ENCODE measurements at regions of chr15 and their contacts with region 1.

Region 1: GRCh38 chr15:90529371-90530249 is at the start of gene CRTC3:
- DNase-seq: peak; percentile 35 to 71 (median 60)
- ATAC-seq: peak; percentile 82 to 84
- H3K4me3 Mint-ChIP-seq: peak within 1 kb of the TSS; percentile 92 to 98 (median 94)
- H3K27ac Mint-ChIP-seq: peak within 1 kb of the TSS; percentile 89 to 97 (median 92)
- H3K4me1 Mint-ChIP-seq: peaks cover 23 to 52% (median 45%) of the 10 kb centered on the region in 4 donors
- H3K27me3 Mint-ChIP-seq: no peaks in the 10 kb centered on the region
- polyA plus RNA-seq, gene CRTC3: 21.9 to 51.1 (median 33.5) TPM

Region 2: GRCh38 chr15:90471769-90472168 is 57.8 kb before region 1 on chr15:
- POLR2A ChIA-PET with region 1: no interaction called
- DNase-seq: no peak
- ATAC-seq: no peak
- H3K4me3 Mint-ChIP-seq: no peak overlapping the region
- H3K27ac Mint-ChIP-seq: no peak overlapping the region
- H3K4me1 Mint-ChIP-seq: peaks cover 10 to 19% (median 13%) of the 10 kb centered on the region in 4 donors
- H3K27me3 Mint-ChIP-seq: no peaks in the 10 kb centered on the region

Region 3: GRCh38 chr15:90512981-90513380 is 16.6 kb before region 1 on chr15:
- POLR2A ChIA-PET with region 1: interaction called, 17 read pairs
- DNase-seq: no peak
- ATAC-seq: no peak
- H3K4me3 Mint-ChIP-seq: no peak overlapping the region
- H3K27ac Mint-ChIP-seq: no peak overlapping the region
- H3K4me1 Mint-ChIP-seq: peaks cover 15 to 26% (median 22%) of the 10 kb centered on the region in 4 donors
- H3K27me3 Mint-ChIP-seq: no peaks in the 10 kb centered on the region

Region 4: DNA sequence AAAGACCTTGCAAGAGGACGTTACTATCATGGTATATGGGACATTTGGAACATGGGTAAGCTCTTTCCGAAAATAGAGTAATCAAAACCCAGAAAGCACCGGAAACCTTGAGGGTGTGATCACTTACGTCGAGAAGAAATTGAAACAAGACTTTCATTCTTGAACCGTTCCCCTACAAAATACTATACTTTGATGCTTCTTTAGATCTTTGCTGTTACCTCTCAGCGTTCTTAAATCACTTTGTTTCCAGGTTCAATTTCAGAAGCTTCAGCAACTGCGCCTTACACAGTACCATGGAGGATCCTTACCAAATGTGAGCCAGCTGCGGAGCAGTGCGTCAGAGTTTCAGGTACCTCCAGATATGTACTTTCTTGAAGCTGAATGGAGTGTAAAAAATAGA is 10.2 kb after region 1 on chr15:
- POLR2A ChIA-PET with region 1: interaction called, 25 read pairs
- DNase-seq: peak in 8 of 10 donors; percentile 16 to 70 (median 52)
- ATAC-seq: peak; percentile 81 to 90
- H3K4me3 Mint-ChIP-seq: peak overlapping the region; percentile 72 to 91 (median 84)
- H3K27ac Mint-ChIP-seq: peak overlapping the region; percentile 74 to 99 (median 96)
- H3K4me1 Mint-ChIP-seq: peaks cover 34 to 81% (median 77%) of the 10 kb centered on the region in 4 donors
- H3K27me3 Mint-ChIP-seq: no peaks in the 10 kb centered on the region

Region 5: GRCh38 chr15:90557186-90558084 is 27.8 kb after region 1 on chr15:
- POLR2A ChIA-PET with region 1: interaction called, 12 read pairs
- DNase-seq: peak in 4 of 10 donors; percentile 23 to 56 (median 44)
- ATAC-seq: peak; percentile 37 to 45
- H3K4me3 Mint-ChIP-seq: peak overlapping the region; percentile 23 to 81 (median 68)
- H3K27ac Mint-ChIP-seq: peak overlapping the region; percentile 77 to 93 (median 90)
- H3K4me1 Mint-ChIP-seq: peaks cover 43 to 85% (median 76%) of the 10 kb centered on the region in 4 donors
- H3K27me3 Mint-ChIP-seq: no peaks in the 10 kb centered on the region

Region 6: DNA sequence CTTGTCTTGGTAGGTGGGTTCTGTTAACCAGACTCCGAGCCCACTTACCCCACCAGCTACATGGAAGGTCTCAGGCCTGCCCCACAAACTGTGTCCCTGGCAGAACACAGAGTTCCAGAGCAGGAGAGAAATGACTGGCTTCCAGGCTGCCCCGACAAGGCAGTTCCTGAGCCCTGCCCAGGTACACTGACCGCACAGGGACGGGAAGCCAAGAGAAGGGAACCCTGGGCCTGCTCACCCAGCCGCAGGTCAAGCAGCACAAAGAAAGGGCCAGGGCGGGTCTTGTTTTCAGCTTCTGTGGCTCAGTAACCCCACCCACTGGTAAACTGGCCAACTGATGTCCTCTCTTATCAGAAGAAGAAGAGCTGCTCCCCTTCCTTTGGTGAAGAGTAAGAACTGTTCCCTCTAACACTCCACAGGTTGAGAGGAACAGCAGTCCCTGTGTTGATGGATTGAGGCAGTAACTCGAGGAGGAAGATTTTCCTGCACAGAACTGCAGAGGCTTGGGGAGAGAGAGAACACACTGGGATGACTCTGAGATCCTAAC is 68.5 kb after region 1 on chr15:
- POLR2A ChIA-PET with region 1: interaction called, 18 read pairs
- DNase-seq: no peak
- ATAC-seq: no peak
- H3K4me3 Mint-ChIP-seq: peak overlapping the region; percentile 6 to 80 (median 74)
- H3K27ac Mint-ChIP-seq: peak overlapping the region; percentile 93 to 100 (median 98)
- H3K4me1 Mint-ChIP-seq: peaks cover 50 to 82% (median 81%) of the 10 kb centered on the region in 4 donors
- H3K27me3 Mint-ChIP-seq: no peaks in the 10 kb centered on the region